K562 (cell line): ENCODE measurements at regions of chr3 and their contacts with region 1.

Region 1: GRCh38 chr3:38004415-38005076 is 14.0 kb downstream of the VILL start:
- DNase-seq: peak in 3 of 4 experiments; percentile 54 to 87 (median 72)
- ATAC-seq: peak; percentile 86
- H3K4me3 ChIP-seq: no peak overlapping the region
- H3K27ac ChIP-seq: no peak overlapping the region
- H3K4me1 ChIP-seq: peaks cover 6 to 48% of the 10 kb centered on the region in 2 experiments; a peak in 4 of 5 replicates
- H3K27me3 ChIP-seq: no peaks in the 10 kb centered on the region
- CTCF ChIP-seq: peak; percentile 84 to 93 (median 88)
- EP300 ChIP-seq: no peak
- POLR2A ChIP-seq: no peak
- RAD21 ChIP-seq: peak; percentile 63 to 85

Region 2: GRCh38 chr3:38039899-38040261 is 35.3 kb after region 1 on chr3:
- CTCF ChIA-PET with region 1: interaction called, 3 read pairs
- POLR2A ChIA-PET with region 1: no interaction called
- in situ Hi-C with region 1: no loop called
- intact Hi-C with region 1: loop called (anchors 1 kb)
- DNase-seq: peak in 3 of 4 experiments; percentile 49 to 63 (median 54)
- ATAC-seq: peak; percentile 92
- H3K4me3 ChIP-seq: no peak overlapping the region
- H3K27ac ChIP-seq: no peak overlapping the region
- H3K4me1 ChIP-seq: peaks cover 4 to 9% of the 10 kb centered on the region in 2 experiments; a peak in 4 of 5 replicates
- H3K27me3 ChIP-seq: peaks cover 15 to 44% of the 10 kb centered on the region in 2 experiments; a peak in 4 of 5 replicates
- CTCF ChIP-seq: peak; percentile 57 to 73 (median 60)
- EP300 ChIP-seq: no peak
- POLR2A ChIP-seq: no peak
- RAD21 ChIP-seq: peak; percentile 73 to 74